Activated CD4-positive, alpha-beta T cell treated with anti-CD3 and anti-CD28 coated beads for 36 hours (primary cell): ENCODE measurements at regions of chr22 and their contacts with region 1.

Region 1: GRCh38 chr22:40922484-40923303 is 28.5 kb upstream of the RBX1 start:
- DNase-seq: no peak
- ATAC-seq: peak; percentile 86
- H3K4me3 Mint-ChIP-seq: peak overlapping the region; percentile 29
- H3K27ac Mint-ChIP-seq: no peak overlapping the region
- H3K4me1 Mint-ChIP-seq: peaks cover 4% of the 10 kb centered on the region
- H3K27me3 Mint-ChIP-seq: no peaks in the 10 kb centered on the region

Region 2: GRCh38 chr22:40844951-40845350 is 77.7 kb before region 1 on chr22:
- CTCF ChIA-PET with region 1: no interaction called
- POLR2A ChIA-PET with region 1: no interaction called
- intact Hi-C with region 1: no loop called
- DNase-seq: no peak
- ATAC-seq: no peak
- H3K4me3 Mint-ChIP-seq: no peak overlapping the region
- H3K27ac Mint-ChIP-seq: no peak overlapping the region
- H3K4me1 Mint-ChIP-seq: peaks cover 16% of the 10 kb centered on the region
- H3K27me3 Mint-ChIP-seq: no peaks in the 10 kb centered on the region

Region 3: GRCh38 chr22:40862537-40862936 is 60.2 kb before region 1 on chr22:
- CTCF ChIA-PET with region 1: no interaction called
- POLR2A ChIA-PET with region 1: no interaction called
- intact Hi-C with region 1: no loop called
- DNase-seq: no peak
- ATAC-seq: no peak
- H3K4me3 Mint-ChIP-seq: no peak overlapping the region
- H3K27ac Mint-ChIP-seq: no peak overlapping the region
- H3K4me1 Mint-ChIP-seq: peaks cover 31% of the 10 kb centered on the region
- H3K27me3 Mint-ChIP-seq: no peaks in the 10 kb centered on the region

Region 4: DNA sequence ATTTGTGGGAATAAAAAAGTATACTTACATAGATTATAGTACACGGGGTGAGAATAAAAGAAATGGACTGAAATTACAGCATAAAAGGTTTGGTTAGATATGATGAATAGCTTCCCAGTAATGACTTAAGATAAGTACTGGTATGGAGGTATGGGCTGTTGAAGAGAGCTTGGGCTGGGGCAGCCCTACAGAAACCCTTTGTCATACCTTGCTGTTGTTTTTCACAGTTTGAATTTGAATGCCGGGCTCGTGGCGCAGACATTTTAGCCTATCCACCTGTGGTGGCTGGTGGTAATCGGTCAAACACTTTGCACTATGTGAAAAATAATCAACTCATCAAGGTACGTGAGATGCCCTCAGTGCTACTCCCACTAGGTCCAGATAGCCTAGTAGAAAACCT is 13.8 kb before region 1 on chr22:
- CTCF ChIA-PET with region 1: interaction called, 15 read pairs
- POLR2A ChIA-PET with region 1: no interaction called
- intact Hi-C with region 1: no loop called
- DNase-seq: no peak
- ATAC-seq: no peak
- H3K4me3 Mint-ChIP-seq: no peak overlapping the region
- H3K27ac Mint-ChIP-seq: no peak overlapping the region
- H3K4me1 Mint-ChIP-seq: no peaks in the 10 kb centered on the region
- H3K27me3 Mint-ChIP-seq: no peaks in the 10 kb centered on the region

Region 5: GRCh38 chr22:41217553-41218157 is 295.0 kb after region 1 on chr22:
- CTCF ChIA-PET with region 1: interaction called, 12 read pairs
- POLR2A ChIA-PET with region 1: interaction called, 5 read pairs
- intact Hi-C with region 1: no loop called
- DNase-seq: peak; percentile 76
- ATAC-seq: peak; percentile 99
- H3K4me3 Mint-ChIP-seq: peak overlapping the region; percentile 48
- H3K27ac Mint-ChIP-seq: peak overlapping the region; percentile 91
- H3K4me1 Mint-ChIP-seq: peaks cover 16% of the 10 kb centered on the region
- H3K27me3 Mint-ChIP-seq: no peaks in the 10 kb centered on the region

Region 6: GRCh38 chr22:41237707-41238569 is 315.2 kb after region 1 on chr22:
- CTCF ChIA-PET with region 1: interaction called, 95 read pairs
- POLR2A ChIA-PET with region 1: interaction called, 7 read pairs
- intact Hi-C with region 1: loop called (anchors 1 to 2 kb)
- DNase-seq: peak; percentile 91
- ATAC-seq: peak; percentile 98
- H3K4me3 Mint-ChIP-seq: peak overlapping the region; percentile 51
- H3K27ac Mint-ChIP-seq: no peak overlapping the region
- H3K4me1 Mint-ChIP-seq: peaks cover 7% of the 10 kb centered on the region
- H3K27me3 Mint-ChIP-seq: no peaks in the 10 kb centered on the region